ENCODE measurements at regions of chr1 and their contacts with region 1.

Region 1: DNA sequence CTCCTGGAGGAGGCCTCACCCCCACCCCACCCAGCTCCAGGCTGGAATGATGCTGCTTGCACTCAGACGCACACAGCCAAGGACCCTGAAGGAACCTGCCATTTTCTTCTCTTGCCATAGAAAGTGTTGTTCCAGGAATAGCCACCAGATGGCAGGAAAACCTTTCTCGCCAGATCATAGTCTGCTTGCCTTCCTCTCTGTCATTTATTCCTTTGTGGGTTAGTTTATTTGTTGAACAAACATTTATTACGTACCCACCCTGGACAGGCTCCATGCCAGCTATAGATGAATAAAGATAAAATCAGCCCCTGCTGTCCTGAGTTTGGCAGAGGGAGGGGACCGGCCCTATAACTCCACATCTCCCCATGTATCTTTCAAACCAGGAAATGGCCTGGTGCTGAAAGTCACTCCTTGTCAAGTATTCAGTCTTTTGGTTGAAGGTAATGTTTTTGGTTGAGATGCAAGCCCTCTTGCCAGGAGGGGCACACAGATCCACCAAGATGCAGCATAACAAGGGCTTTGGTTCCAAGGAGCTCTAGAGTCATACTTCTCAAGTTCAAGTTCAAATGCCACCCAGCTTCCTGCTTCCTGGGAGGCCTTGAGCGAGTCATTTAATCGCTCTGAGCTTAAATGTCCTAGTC is 7.0 kb upstream of the KCNC4 start:
- DNase-seq: peak; percentile 38
- H3K4me3 ChIP-seq: no peak overlapping the region
- H3K27ac ChIP-seq: no peak overlapping the region
- H3K27me3 ChIP-seq: peaks cover 3% of the 10 kb centered on the region
- CTCF ChIP-seq: peak; percentile 90

Region 2: GRCh38 chr1:110190282-110190929 is 12.7 kb before region 1 on chr1:
- CTCF ChIA-PET with region 1: interaction called, 16 read pairs
- POLR2A ChIA-PET with region 1: no interaction called
- DNase-seq: no peak
- H3K4me3 ChIP-seq: no peak overlapping the region
- H3K27ac ChIP-seq: no peak overlapping the region
- H3K27me3 ChIP-seq: peaks cover 7% of the 10 kb centered on the region
- CTCF ChIP-seq: no peak

Region 3: GRCh38 chr1:110292031-110292741 is 89.0 kb after region 1 on chr1:
- CTCF ChIA-PET with region 1: interaction called, 25 read pairs
- POLR2A ChIA-PET with region 1: no interaction called
- DNase-seq: no peak
- H3K4me3 ChIP-seq: no peak overlapping the region
- H3K27ac ChIP-seq: no peak overlapping the region
- H3K27me3 ChIP-seq: no peaks in the 10 kb centered on the region
- CTCF ChIP-seq: no peak

Region 4: DNA sequence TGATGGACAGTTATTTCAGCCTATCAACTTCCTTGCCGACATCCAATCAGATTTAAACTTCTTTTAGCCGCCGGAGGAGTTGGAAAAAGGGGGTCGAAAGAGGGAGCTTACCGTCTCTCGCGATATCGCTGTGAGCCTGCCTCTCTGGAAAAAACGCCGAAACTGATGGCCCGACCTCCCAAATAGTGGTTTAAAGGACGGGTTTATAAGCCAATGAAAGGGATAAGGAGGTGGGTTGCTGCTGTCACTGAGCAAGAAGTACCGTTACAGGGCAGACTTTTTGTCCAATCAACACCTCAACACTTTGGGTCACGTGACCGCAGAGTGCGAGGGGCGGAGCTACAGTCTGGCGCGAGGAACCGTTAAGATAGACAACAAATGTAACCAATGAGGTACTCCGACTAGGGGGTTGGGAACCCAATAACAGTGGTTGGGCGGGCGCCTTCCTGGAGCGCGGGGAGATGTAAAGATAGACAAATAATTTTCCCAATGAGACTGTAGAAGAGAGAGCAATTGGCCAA is 135.8 kb after region 1 on chr1 and contains the start of gene RBM15:
- CTCF ChIA-PET with region 1: interaction called, 86 read pairs
- POLR2A ChIA-PET with region 1: interaction called, 5 read pairs
- DNase-seq: peak; percentile 100
- H3K4me3 ChIP-seq: peak within 1 kb of the TSS; percentile 98
- H3K27ac ChIP-seq: peak within 1 kb of the TSS; percentile 99
- H3K27me3 ChIP-seq: no peaks in the 10 kb centered on the region
- CTCF ChIP-seq: no peak
- polyA plus RNA-seq, gene RBM15: 8.9 and 9.6 TPM in 2 replicates

Region 5: DNA sequence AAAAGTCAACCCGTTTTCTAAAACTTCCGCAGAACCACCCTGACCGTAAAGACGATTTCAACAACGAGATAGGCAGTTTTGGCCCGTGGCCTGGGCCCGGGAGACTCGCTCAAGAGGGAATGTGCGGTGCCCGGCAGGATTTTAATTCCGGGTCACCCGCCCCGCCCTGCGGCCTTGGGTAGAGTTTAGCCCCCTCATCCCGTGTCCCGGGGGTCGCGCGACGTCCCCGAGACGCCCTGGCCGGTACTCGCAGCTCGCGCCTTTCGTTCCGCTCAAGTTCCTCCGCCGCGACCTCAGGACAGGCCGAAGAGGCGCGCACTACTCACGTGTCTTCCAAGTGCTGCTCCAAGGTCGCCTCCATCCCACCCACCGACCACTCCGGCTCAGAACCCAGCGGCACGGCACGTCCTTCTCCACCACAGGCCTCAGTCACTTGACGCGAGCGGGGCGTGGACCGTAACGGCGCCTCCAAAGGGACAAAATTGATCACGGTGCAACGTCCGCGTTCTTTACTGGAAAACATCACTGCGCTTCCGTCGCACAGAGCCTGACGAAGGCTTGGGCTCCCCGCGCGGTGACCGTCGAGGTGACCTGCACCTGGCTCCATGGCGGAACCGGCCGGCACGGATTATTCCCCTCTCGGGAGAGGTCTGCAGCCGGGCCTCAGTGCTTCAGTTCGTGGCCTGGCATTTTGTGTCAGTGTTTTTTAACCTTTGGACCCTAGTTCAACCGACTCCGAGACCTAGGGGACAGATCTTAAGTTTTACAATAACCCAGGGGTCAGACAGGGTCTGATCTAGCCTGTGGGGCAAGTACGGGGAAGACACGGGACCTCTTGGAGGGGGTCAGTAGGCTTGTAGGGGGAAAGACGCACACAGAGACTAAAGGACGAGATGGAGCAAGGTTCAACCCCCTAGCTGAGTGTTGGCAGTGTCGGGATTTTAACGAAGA is 204.4 kb after region 1 on chr1 and contains the start of gene LAMTOR5:
- CTCF ChIA-PET with region 1: interaction called, 84 read pairs
- POLR2A ChIA-PET with region 1: no interaction called
- DNase-seq: peak; percentile 65
- H3K4me3 ChIP-seq: peak within 1 kb of the TSS; percentile 98
- H3K27ac ChIP-seq: peak within 1 kb of the TSS; percentile 93
- H3K27me3 ChIP-seq: no peaks in the 10 kb centered on the region
- CTCF ChIP-seq: no peak
- polyA plus RNA-seq, gene LAMTOR5: 288 and 300 TPM in 2 replicates

Measured in AG04450 (cell line).